B cell (primary cell): ENCODE measurements at regions of chr2 and their contacts with region 1.

Region 1: GRCh38 chr2:171271971-171272436 is 111.3 kb upstream of the TLK1 start:
- DNase-seq: no peak
- ATAC-seq: no peak
- H3K4me3 ChIP-seq: no peak overlapping the region
- H3K4me3 Mint-ChIP-seq: no peak overlapping the region
- H3K27ac ChIP-seq: no peak overlapping the region
- H3K27ac Mint-ChIP-seq: no peak overlapping the region
- H3K4me1 ChIP-seq: no peaks in the 10 kb centered on the region
- H3K4me1 Mint-ChIP-seq: no peaks in the 10 kb centered on the region
- H3K27me3 ChIP-seq: no peaks in the 10 kb centered on the region
- H3K27me3 Mint-ChIP-seq: no peaks in the 10 kb centered on the region
- CTCF ChIP-seq: no peak

Region 2: GRCh38 chr2:170928104-170928823 is 343.7 kb before region 1 on chr2:
- CTCF ChIA-PET with region 1: no interaction called
- POLR2A ChIA-PET with region 1: no interaction called
- intact Hi-C with region 1: no loop called
- DNase-seq: no peak
- ATAC-seq: no peak
- H3K4me3 ChIP-seq: peak overlapping the region; percentile 31 to 95 (median 49)
- H3K4me3 Mint-ChIP-seq: peak overlapping the region; percentile 92
- H3K27ac ChIP-seq: peak overlapping the region; percentile 68 to 69
- H3K27ac Mint-ChIP-seq: peak overlapping the region; percentile 96
- H3K4me1 ChIP-seq: peaks cover 20 to 22% of the 10 kb centered on the region in 2 donors
- H3K4me1 Mint-ChIP-seq: peaks cover 32% of the 10 kb centered on the region
- H3K27me3 ChIP-seq: no peaks in the 10 kb centered on the region
- H3K27me3 Mint-ChIP-seq: no peaks in the 10 kb centered on the region
- CTCF ChIP-seq: no peak

Region 3: GRCh38 chr2:171287611-171288010 is 15.6 kb after region 1 on chr2:
- CTCF ChIA-PET with region 1: interaction called, 3 read pairs
- POLR2A ChIA-PET with region 1: interaction called, 10 read pairs
- intact Hi-C with region 1: no loop called
- DNase-seq: no peak
- ATAC-seq: no peak
- H3K4me3 ChIP-seq: no peak overlapping the region
- H3K4me3 Mint-ChIP-seq: no peak overlapping the region
- H3K27ac ChIP-seq: no peak overlapping the region
- H3K27ac Mint-ChIP-seq: no peak overlapping the region
- H3K4me1 ChIP-seq: no peaks in the 10 kb centered on the region
- H3K4me1 Mint-ChIP-seq: no peaks in the 10 kb centered on the region
- H3K27me3 ChIP-seq: no peaks in the 10 kb centered on the region
- H3K27me3 Mint-ChIP-seq: no peaks in the 10 kb centered on the region
- CTCF ChIP-seq: no peak